Ascending aorta (tissue), 2 donors: ENCODE measurements at regions of chr14 and their contacts with region 1.

Region 1: GRCh38 chr14:58152014-58152857 is at the start of gene ARMH4:
- DNase-seq: peak; percentile 43 to 91
- H3K4me3 ChIP-seq: peak within 1 kb of the TSS; percentile 80 to 88
- H3K27ac ChIP-seq: peak within 1 kb of the TSS; percentile 63 to 77
- H3K4me1 ChIP-seq: no peaks in the 10 kb centered on the region
- H3K27me3 ChIP-seq: no peaks in the 10 kb centered on the region
- CTCF ChIP-seq: peak in 1 of 3 experiments; percentile 20
- total RNA-seq, gene ARMH4: 3.8 TPM

Region 2: GRCh38 chr14:58107947-58108552 is 44.2 kb before region 1 on chr14:
- intact Hi-C with region 1: loop called (anchors 5 kb)
- DNase-seq: peak in 1 of 2 donors; percentile 66
- H3K4me3 ChIP-seq: no peak overlapping the region
- H3K27ac ChIP-seq: no peak overlapping the region
- H3K4me1 ChIP-seq: no peaks in the 10 kb centered on the region
- H3K27me3 ChIP-seq: no peaks in the 10 kb centered on the region
- CTCF ChIP-seq: peak; percentile 65 to 84 (median 68)

Region 3: DNA sequence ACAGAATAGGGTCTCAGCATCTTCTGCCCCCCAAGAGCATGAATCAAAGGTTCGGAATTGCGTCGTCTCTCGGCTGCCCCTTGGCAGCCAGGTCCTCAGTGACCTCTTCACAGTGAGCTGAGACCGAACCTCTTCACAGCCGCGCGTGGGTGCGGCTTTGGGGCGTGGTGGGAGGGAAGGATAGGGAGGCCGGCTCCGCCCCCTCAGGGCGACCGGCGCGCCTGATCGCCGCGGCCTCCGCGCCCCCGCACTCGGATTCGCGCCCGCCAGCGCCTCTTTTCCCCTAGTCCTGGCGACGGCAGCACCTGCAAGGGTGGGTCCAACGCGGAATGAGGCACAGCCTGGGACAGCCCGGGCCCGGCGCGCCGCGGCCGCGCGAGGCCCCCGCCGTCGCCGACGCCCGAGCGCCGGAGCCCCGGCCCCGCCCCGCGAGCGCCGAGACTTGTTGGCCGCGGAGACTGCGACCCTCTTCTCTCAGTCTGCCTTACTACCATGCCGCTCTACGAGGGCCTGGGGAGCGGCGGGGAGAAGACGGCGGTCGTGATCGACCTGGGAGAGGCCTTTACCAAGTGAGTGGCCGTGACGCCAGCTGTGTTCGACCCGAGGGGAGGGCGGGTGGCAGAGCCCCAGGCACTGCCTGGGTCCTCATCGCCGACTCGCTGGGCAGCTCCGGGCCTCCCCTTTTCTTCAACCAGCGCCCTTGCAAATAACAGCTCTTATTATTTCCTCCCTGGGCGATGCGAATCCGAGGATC is 47.7 kb after region 1 on chr14 and contains the start of gene ACTR10:
- intact Hi-C with region 1: loop called (anchors 5 kb)
- DNase-seq: peak; percentile 36 to 90
- H3K4me3 ChIP-seq: peak within 1 kb of the TSS; percentile 83 to 95
- H3K27ac ChIP-seq: peak within 1 kb of the TSS; percentile 94 to 95
- H3K4me1 ChIP-seq: peaks cover 3 to 17% of the 10 kb centered on the region in 2 donors
- H3K27me3 ChIP-seq: no peaks in the 10 kb centered on the region
- CTCF ChIP-seq: no peak
- total RNA-seq, gene ACTR10: 32.2 TPM